ENCODE measurements at regions of chrX and their contacts with region 1.

Region 1: GRCh38 chrX:107684956-107685385 is 56.7 kb downstream of the PRPS1 start:
- DNase-seq: no peak
- ATAC-seq: no peak
- H3K4me3 Mint-ChIP-seq: no peak overlapping the region
- H3K27ac Mint-ChIP-seq: no peak overlapping the region
- H3K4me1 Mint-ChIP-seq: peaks cover 25% of the 10 kb centered on the region
- H3K27me3 Mint-ChIP-seq: no peaks in the 10 kb centered on the region
- CTCF ChIP-seq: no peak

Region 2: DNA sequence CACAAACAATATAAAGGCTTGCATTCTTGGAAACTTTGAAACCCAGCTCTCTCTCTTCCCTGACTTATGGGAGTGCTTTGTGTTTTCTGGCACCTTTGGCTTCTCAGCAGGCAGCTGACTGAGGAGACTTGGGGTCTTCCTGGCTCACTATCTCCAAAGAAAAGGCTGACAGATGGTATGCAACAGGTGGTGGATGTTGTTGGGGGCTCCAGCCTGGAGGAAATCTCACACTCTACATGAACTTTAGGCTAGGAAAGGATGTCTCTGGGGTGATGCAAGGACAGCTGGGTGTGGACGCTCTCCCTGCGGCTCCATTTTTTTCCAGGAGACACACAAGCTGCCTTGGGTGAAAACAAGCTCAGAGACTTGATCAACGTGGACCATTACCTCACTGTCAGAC is 411.2 kb before region 1 on chrX:
- CTCF ChIA-PET with region 1: no interaction called
- POLR2A ChIA-PET with region 1: no interaction called
- intact Hi-C with region 1: no loop called
- DNase-seq: no peak
- ATAC-seq: no peak
- H3K4me3 Mint-ChIP-seq: no peak overlapping the region
- H3K27ac Mint-ChIP-seq: no peak overlapping the region
- H3K4me1 Mint-ChIP-seq: peaks cover 3% of the 10 kb centered on the region
- H3K27me3 Mint-ChIP-seq: peaks cover 9% of the 10 kb centered on the region
- CTCF ChIP-seq: no peak

Region 3: GRCh38 chrX:107421408-107421807 is 263.6 kb before region 1 on chrX:
- CTCF ChIA-PET with region 1: no interaction called
- POLR2A ChIA-PET with region 1: no interaction called
- intact Hi-C with region 1: no loop called
- DNase-seq: no peak
- ATAC-seq: no peak
- H3K4me3 Mint-ChIP-seq: no peak overlapping the region
- H3K27ac Mint-ChIP-seq: no peak overlapping the region
- H3K4me1 Mint-ChIP-seq: peaks cover 9% of the 10 kb centered on the region
- H3K27me3 Mint-ChIP-seq: peaks cover 2% of the 10 kb centered on the region
- CTCF ChIP-seq: no peak

Region 4: GRCh38 chrX:107701493-107702121 is 16.6 kb after region 1 on chrX:
- CTCF ChIA-PET with region 1: no interaction called
- POLR2A ChIA-PET with region 1: no interaction called
- intact Hi-C with region 1: loop called (anchors 2 kb)
- DNase-seq: no peak
- ATAC-seq: peak; percentile 75
- H3K4me3 Mint-ChIP-seq: no peak overlapping the region
- H3K27ac Mint-ChIP-seq: peak overlapping the region; percentile 76
- H3K4me1 Mint-ChIP-seq: peaks cover 33% of the 10 kb centered on the region
- H3K27me3 Mint-ChIP-seq: no peaks in the 10 kb centered on the region
- CTCF ChIP-seq: no peak

Region 5: GRCh38 chrX:109134777-109135176 is 1449.8 kb after region 1 on chrX:
- CTCF ChIA-PET with region 1: no interaction called
- POLR2A ChIA-PET with region 1: no interaction called
- intact Hi-C with region 1: no loop called
- DNase-seq: no peak
- ATAC-seq: no peak
- H3K4me3 Mint-ChIP-seq: no peak overlapping the region
- H3K27ac Mint-ChIP-seq: no peak overlapping the region
- H3K4me1 Mint-ChIP-seq: no peaks in the 10 kb centered on the region
- H3K27me3 Mint-ChIP-seq: no peaks in the 10 kb centered on the region
- CTCF ChIP-seq: no peak

Measured in activated B cell treated with CpG ODN at 0.5 μM for 24 hours (primary cell).